ENCODE measurements at regions of chr3 and their contacts with region 1.

Region 1: GRCh38 chr3:122101646-122102045 is 46.5 kb downstream of the CD86 start:
- DNase-seq: peak in 1 of 2 donors; percentile 79
- ATAC-seq: peak in 2 of 3 donors; percentile 45 to 58
- H3K4me3 ChIP-seq: no peak overlapping the region
- H3K4me3 Mint-ChIP-seq: no peak overlapping the region
- H3K27ac ChIP-seq: no peak overlapping the region
- H3K27ac Mint-ChIP-seq: no peak overlapping the region
- H3K4me1 ChIP-seq: no peaks in the 10 kb centered on the region
- H3K4me1 Mint-ChIP-seq: peaks cover 7 to 15% of the 10 kb centered on the region in 2 donors
- H3K27me3 ChIP-seq: no peaks in the 10 kb centered on the region
- H3K27me3 Mint-ChIP-seq: no peaks in the 10 kb centered on the region
- CTCF ChIP-seq: peak; percentile 16

Region 2: GRCh38 chr3:122055215-122055614 is 46.4 kb before region 1 on chr3 and contains the start of gene CD86:
- intact Hi-C with region 1: no loop called
- DNase-seq: no peak
- ATAC-seq: no peak
- H3K4me3 ChIP-seq: peak within 1 kb of the TSS; percentile 28
- H3K4me3 Mint-ChIP-seq: peak within 1 kb of the TSS; percentile 3
- H3K27ac ChIP-seq: peak within 1 kb of the TSS; percentile 33
- H3K27ac Mint-ChIP-seq: no peak within 1 kb of the TSS
- H3K4me1 ChIP-seq: no peaks in the 10 kb centered on the region
- H3K4me1 Mint-ChIP-seq: no peaks in the 10 kb centered on the region
- H3K27me3 ChIP-seq: no peaks in the 10 kb centered on the region
- H3K27me3 Mint-ChIP-seq: peaks cover 9 to 10% of the 10 kb centered on the region in 2 donors
- CTCF ChIP-seq: no peak
- total RNA-seq, gene CD86: 2.1 to 6.9 (median 4.7) TPM

Region 3: GRCh38 chr3:122299872-122300460 is 198.3 kb after region 1 on chr3:
- intact Hi-C with region 1: loop called (anchors 10 kb)
- DNase-seq: peak in 1 of 2 donors; percentile 77
- ATAC-seq: peak in 1 of 3 donors; percentile 49
- H3K4me3 ChIP-seq: no peak overlapping the region
- H3K4me3 Mint-ChIP-seq: no peak overlapping the region
- H3K27ac ChIP-seq: no peak overlapping the region
- H3K27ac Mint-ChIP-seq: no peak overlapping the region
- H3K4me1 ChIP-seq: no peaks in the 10 kb centered on the region
- H3K4me1 Mint-ChIP-seq: no peaks in the 10 kb centered on the region
- H3K27me3 ChIP-seq: no peaks in the 10 kb centered on the region
- H3K27me3 Mint-ChIP-seq: peaks cover 0 to 5% of the 10 kb centered on the region in 2 donors
- CTCF ChIP-seq: peak; percentile 63

Region 4: GRCh38 chr3:122403489-122403888 is 301.8 kb after region 1 on chr3:
- intact Hi-C with region 1: no loop called
- DNase-seq: no peak
- ATAC-seq: no peak
- H3K4me3 ChIP-seq: no peak overlapping the region
- H3K4me3 Mint-ChIP-seq: no peak overlapping the region
- H3K27ac ChIP-seq: no peak overlapping the region
- H3K27ac Mint-ChIP-seq: no peak overlapping the region
- H3K4me1 ChIP-seq: no peaks in the 10 kb centered on the region
- H3K4me1 Mint-ChIP-seq: no peaks in the 10 kb centered on the region
- H3K27me3 ChIP-seq: no peaks in the 10 kb centered on the region
- H3K27me3 Mint-ChIP-seq: no peaks in the 10 kb centered on the region
- CTCF ChIP-seq: no peak

Region 5: DNA sequence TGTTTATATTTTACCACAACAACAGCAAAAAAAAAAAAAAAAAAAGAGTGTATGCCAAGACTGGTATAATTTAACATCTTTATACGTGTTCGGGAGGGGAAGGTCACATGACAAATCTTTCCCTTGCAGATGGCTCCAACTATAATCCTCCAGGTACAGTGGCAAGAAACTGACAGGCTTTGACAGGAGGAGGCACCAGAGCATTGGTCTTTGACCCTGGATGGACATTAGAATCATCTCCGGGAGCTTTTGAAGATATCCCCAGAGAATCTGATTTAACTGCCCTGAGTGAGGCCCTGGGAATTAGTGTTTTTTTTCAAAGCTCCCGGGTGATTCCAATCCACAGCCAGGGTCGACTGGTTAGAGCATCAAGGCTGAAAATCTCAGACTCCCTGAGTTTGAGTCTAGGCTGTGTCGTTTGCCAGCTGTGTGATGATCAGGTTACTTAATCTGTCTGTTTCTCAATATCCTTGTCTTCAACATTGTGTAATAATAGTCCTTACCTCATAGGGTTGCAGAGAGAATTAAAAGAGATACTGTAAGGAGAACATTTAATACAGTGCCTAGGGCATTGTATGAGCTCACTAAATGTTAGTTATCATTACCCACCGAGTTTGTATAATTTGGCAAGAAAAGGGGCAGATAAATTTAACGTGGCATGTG is 934.8 kb after region 1 on chr3:
- intact Hi-C with region 1: no loop called
- DNase-seq: no peak
- ATAC-seq: no peak
- H3K4me3 ChIP-seq: no peak overlapping the region
- H3K4me3 Mint-ChIP-seq: no peak overlapping the region
- H3K27ac ChIP-seq: no peak overlapping the region
- H3K27ac Mint-ChIP-seq: no peak overlapping the region
- H3K4me1 ChIP-seq: no peaks in the 10 kb centered on the region
- H3K4me1 Mint-ChIP-seq: no peaks in the 10 kb centered on the region
- H3K27me3 ChIP-seq: no peaks in the 10 kb centered on the region
- H3K27me3 Mint-ChIP-seq: peaks cover 26 to 41% of the 10 kb centered on the region in 2 donors
- CTCF ChIP-seq: no peak

Measured in natural killer cell (primary cell).